ENCODE measurements at regions of chr1 and their contacts with region 1.

Region 1: GRCh38 chr1:208245185-208245705 is 1.1 kb upstream of the PLXNA2 start:
- DNase-seq: peak; percentile 92
- H3K4me3 ChIP-seq: peak overlapping the region in 1 of 3 experiments; percentile 40
- H3K27ac ChIP-seq: peak overlapping the region; percentile 70
- H3K4me1 ChIP-seq: peaks cover 23% of the 10 kb centered on the region
- H3K27me3 ChIP-seq: peaks cover 0 to 2% of the 10 kb centered on the region in 2 experiments
- CTCF ChIP-seq: peak; percentile 69 to 76
- POLR2A ChIP-seq: no peak

Region 2: GRCh38 chr1:207997486-207998268 is 247.6 kb before region 1 on chr1:
- CTCF ChIA-PET with region 1: interaction called, 18 read pairs
- POLR2A ChIA-PET with region 1: no interaction called
- dilution Hi-C with region 1: no loop called
- intact Hi-C with region 1: no loop called
- DNase-seq: peak; percentile 75
- H3K4me3 ChIP-seq: no peak overlapping the region
- H3K27ac ChIP-seq: no peak overlapping the region
- H3K4me1 ChIP-seq: no peaks in the 10 kb centered on the region
- H3K27me3 ChIP-seq: peaks cover 14 to 29% of the 10 kb centered on the region in 2 experiments
- CTCF ChIP-seq: peak; percentile 89 to 92
- POLR2A ChIP-seq: no peak

Region 3: DNA sequence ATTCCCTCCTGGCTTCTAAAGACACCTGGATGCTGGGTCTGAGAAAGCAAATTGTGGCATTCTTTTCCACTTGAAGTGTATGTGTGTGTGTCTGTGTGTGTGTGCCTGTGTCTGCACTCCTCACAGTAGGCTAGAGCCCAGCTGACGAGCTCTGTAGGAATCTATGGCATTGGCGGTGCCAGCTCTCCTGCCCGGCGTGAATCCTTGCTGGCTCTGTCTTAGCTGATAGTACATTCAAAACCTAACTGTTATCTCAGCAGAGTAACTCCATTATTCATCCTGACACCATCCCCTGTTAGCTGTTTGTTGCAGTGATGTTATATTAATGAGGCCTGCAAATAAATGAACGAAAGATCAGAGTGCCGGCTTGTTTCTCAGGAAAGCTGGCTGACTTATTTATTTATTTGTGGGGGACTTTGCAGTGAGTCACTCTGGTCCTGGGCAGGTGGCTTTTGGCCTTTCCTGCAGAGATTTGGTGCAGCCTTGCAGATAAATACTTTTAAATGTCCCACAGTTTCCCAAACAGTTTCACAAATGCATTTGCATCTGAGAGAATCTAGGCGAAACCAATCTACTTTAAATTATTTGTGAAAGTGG is 173.7 kb before region 1 on chr1:
- CTCF ChIA-PET with region 1: interaction called, 16 read pairs
- POLR2A ChIA-PET with region 1: no interaction called
- dilution Hi-C with region 1: no loop called
- intact Hi-C with region 1: no loop called
- DNase-seq: no peak
- H3K4me3 ChIP-seq: no peak overlapping the region
- H3K27ac ChIP-seq: no peak overlapping the region
- H3K4me1 ChIP-seq: no peaks in the 10 kb centered on the region
- H3K27me3 ChIP-seq: no peaks in the 10 kb centered on the region
- CTCF ChIP-seq: no peak
- POLR2A ChIP-seq: no peak

Region 4: GRCh38 chr1:208111646-208112184 is 133.5 kb before region 1 on chr1:
- CTCF ChIA-PET with region 1: interaction called, 14 read pairs
- POLR2A ChIA-PET with region 1: no interaction called
- dilution Hi-C with region 1: no loop called
- intact Hi-C with region 1: no loop called
- DNase-seq: no peak
- H3K4me3 ChIP-seq: no peak overlapping the region
- H3K27ac ChIP-seq: no peak overlapping the region
- H3K4me1 ChIP-seq: peaks cover 10% of the 10 kb centered on the region
- H3K27me3 ChIP-seq: no peaks in the 10 kb centered on the region
- CTCF ChIP-seq: no peak
- POLR2A ChIP-seq: no peak

Region 5: DNA sequence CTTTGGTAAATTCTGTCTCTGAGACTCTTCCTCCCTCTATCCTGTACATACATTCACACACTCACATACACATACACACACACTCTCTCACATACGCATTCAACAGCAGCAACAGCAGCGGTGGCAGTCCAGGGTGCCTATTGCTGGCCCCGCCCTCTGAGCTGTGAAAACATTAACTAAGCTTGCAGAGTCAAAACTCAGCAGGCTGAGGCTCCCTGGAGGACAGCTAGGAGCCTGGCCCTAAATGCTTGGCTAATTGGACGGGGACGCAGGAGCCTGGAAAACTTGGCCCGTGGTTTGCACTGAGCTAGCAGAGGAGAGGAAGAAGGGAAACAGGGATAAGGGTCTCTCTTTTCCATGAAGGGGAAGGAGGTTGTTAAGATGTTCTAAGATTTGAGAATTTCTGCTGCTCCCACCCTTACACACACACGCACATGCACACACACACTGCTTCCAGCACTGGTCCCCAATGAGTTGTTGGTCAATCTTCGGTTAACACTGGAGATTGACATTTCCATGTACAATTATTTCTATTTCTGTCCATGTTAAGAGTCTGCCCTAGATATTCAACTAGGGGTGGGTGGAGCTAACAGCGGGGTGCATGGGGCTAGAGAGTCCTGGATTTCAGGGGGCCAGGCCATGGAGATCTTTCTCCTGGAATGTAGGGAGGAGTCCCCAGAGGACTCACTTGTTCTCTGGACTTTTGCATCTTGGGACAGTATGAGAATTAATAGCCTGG is 95.3 kb before region 1 on chr1:
- CTCF ChIA-PET with region 1: interaction called, 26 read pairs
- POLR2A ChIA-PET with region 1: no interaction called
- dilution Hi-C with region 1: loop called (anchors 25 kb)
- intact Hi-C with region 1: no loop called
- DNase-seq: no peak
- H3K4me3 ChIP-seq: no peak overlapping the region
- H3K27ac ChIP-seq: no peak overlapping the region
- H3K4me1 ChIP-seq: peaks cover 15% of the 10 kb centered on the region
- H3K27me3 ChIP-seq: no peaks in the 10 kb centered on the region
- CTCF ChIP-seq: no peak
- POLR2A ChIP-seq: no peak

Region 6: GRCh38 chr1:208219659-208220282 is 25.5 kb before region 1 on chr1:
- CTCF ChIA-PET with region 1: interaction called, 714 read pairs
- POLR2A ChIA-PET with region 1: no interaction called
- dilution Hi-C with region 1: no loop called
- intact Hi-C with region 1: loop called (anchors 1 kb)
- DNase-seq: peak; percentile 82
- H3K4me3 ChIP-seq: no peak overlapping the region
- H3K27ac ChIP-seq: peak overlapping the region; percentile 91
- H3K4me1 ChIP-seq: peaks cover 90% of the 10 kb centered on the region
- H3K27me3 ChIP-seq: no peaks in the 10 kb centered on the region
- CTCF ChIP-seq: no peak
- POLR2A ChIP-seq: peak; percentile 33